ENCODE measurements at regions of chr6 and their contacts with region 1.

Region 1: DNA sequence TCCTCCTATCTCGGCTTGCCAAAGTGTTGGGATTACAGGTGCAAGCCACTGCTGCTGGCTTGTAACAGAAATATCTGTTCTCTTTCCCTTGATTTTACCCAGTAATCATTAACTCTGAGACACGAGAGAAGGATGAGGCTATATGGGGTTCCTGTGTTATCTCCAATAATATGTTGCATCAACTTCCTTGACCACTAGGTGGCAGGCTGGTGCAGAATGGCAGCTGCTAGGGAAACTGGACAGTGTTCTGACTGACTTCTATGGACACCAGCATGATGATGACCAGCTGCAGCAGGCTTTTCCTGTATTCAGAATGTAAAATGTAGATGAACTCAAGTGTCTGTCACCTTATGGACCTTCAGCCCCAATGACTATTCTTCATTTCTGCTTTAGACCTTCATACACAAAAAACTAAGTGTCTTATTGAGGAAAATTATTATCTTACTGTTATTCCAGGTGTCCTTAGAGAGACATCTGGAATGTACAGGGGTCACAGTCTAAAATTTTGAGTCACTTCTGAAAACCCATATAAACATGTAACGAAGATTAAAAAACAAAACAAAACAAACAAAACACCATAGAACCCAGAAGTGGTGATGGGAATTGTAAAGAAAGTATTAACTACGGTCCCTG is 20.4 kb upstream of the CD109 start:
- DNase-seq: peak; percentile 71
- CTCF ChIP-seq: peak; percentile 87

Region 2: GRCh38 chr6:73653571-73654424 is 21.8 kb before region 1 on chr6 and contains the start of gene SLC17A5:
- CTCF ChIA-PET with region 1: interaction called, 23 read pairs
- POLR2A ChIA-PET with region 1: no interaction called
- DNase-seq: peak; percentile 95
- CTCF ChIP-seq: no peak

Region 3: GRCh38 chr6:73691512-73691911 is 15.9 kb after region 1 on chr6:
- CTCF ChIA-PET with region 1: interaction called, 74 read pairs
- POLR2A ChIA-PET with region 1: no interaction called
- DNase-seq: no peak
- CTCF ChIP-seq: no peak

Region 4: DNA sequence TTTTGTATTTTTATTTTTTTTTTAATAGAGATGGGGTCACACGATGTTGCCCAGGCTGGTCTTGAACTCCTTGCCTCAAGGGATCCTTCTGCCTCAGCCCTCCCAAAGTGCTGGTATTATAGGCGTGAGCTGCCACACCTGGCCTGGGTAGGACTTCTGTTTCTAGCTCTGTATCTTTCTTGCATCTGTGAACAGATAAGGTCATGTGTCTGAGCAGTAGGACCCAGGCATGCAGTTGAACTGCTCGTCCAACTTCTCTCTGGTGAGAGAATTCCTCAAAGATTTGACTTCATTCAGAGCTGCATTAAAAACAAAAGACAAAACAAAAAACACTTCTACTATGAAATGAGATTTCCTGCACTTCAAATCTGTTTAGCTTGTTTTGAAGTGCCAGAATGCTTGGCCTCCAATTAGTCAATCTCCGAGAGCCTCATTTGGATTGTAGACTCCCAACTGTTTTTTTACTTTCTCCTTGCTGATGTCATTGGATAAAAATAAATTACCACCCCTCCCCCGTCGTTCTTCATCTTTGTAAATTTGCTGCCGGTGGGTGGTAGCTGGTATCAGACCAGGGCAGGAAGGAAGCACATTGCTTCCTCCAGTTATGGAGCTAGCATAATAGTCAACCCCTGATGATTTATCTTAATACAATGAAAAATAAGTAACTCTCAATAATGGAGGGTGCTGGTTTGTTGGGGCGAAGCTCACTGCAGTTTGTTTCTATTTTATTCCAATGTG is 38.0 kb after region 1 on chr6:
- CTCF ChIA-PET with region 1: interaction called, 10 read pairs
- POLR2A ChIA-PET with region 1: no interaction called
- DNase-seq: no peak
- CTCF ChIP-seq: no peak